Psoas muscle (tissue), 8 donors: ENCODE measurements at regions of chr10 and their contacts with region 1.

Region 1: GRCh38 chr10:19788075-19788686 is 28.1 kb upstream of the PLXDC2 start:
- DNase-seq: no peak
- ATAC-seq: no peak
- H3K4me3 ChIP-seq: no peak overlapping the region
- H3K27ac ChIP-seq: no peak overlapping the region
- H3K4me1 ChIP-seq: no peaks in the 10 kb centered on the region
- H3K27me3 ChIP-seq: no peaks in the 10 kb centered on the region
- CTCF ChIP-seq: peak; percentile 73

Region 2: GRCh38 chr10:19412531-19412930 is 375.6 kb before region 1 on chr10:
- intact Hi-C with region 1: loop called in 1 of 2 experiments (anchors 10 kb)
- DNase-seq: no peak
- ATAC-seq: peak in 1 of 4 donors; percentile 62
- H3K4me3 ChIP-seq: no peak overlapping the region
- H3K27ac ChIP-seq: no peak overlapping the region
- H3K4me1 ChIP-seq: no peaks in the 10 kb centered on the region
- H3K27me3 ChIP-seq: no peaks in the 10 kb centered on the region
- CTCF ChIP-seq: peak; percentile 49

Region 3: DNA sequence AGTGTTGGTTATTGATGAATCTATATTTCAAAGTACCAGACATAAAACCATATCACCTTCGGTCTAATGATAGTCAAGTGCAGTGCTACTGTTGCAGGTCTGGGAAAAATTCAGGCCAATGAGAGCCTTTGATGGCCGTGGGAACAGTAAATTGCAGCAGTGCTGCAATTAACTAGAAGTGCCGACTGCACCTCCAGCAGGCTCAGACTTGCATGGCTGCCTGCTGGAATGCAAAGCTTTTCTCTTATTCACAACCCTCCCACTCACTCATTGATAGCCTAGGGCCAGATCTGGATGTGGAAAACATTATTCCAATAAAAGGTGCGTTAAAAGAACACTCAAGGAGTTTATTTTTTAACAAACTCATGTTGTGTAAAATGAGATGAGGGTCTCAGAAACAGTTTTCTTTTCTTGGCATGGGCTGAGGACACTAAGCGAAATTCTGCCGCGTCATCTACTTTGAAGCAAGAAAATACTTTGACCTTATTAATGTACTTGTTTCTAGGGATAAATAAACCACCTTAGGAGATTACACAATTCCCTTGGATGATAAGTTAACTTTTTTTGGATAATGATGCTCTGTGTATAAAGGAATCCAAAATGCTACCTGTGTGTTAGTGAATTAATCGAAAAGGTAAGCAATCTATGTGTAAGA is 45.1 kb after region 1 on chr10:
- intact Hi-C with region 1: no loop called
- DNase-seq: no peak
- ATAC-seq: no peak
- H3K4me3 ChIP-seq: no peak overlapping the region
- H3K27ac ChIP-seq: no peak overlapping the region
- H3K4me1 ChIP-seq: peaks cover 7% of the 10 kb centered on the region
- H3K27me3 ChIP-seq: no peaks in the 10 kb centered on the region
- CTCF ChIP-seq: no peak